ENCODE measurements at regions of chr11 and their contacts with region 1.

Region 1: DNA sequence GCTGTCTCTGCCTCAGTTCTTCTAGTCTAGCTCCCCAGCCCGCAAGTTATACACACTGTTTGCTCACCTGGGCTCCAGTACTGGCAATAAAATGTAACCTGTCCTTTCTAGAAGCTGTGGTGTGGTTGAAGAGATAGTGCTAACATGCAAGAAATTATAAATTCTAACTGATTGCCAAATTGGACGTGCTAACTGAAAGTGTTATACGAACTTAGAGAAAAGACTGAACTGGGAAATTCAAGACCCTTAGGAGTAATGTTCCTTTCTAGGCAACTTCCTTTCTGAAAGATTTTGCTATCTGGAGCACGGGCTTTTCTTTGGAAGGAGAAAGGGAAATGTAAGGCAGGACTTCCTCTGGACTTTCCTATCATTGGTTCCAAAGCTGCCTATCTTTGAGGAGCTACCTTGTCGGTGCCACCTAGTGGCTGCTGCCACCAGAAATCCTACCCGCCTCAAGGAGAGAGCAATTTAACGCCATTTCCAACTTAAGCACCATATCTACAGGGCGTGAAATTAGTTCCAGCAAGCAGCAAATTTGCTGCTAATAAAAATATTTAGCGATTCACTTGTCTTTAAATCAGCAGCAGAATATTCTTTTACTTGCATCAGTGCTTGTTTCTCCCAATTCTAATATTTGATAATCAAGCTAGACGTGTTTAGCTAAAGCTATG is 12.7 kb upstream of the TMEM218 start:
- DNase-seq: no peak
- H3K4me3 ChIP-seq: no peak overlapping the region
- CTCF ChIP-seq: peak; percentile 41

Region 2: GRCh38 chr11:124602193-124602592 is 521.9 kb before region 1 on chr11:
- CTCF ChIA-PET with region 1: no interaction called
- POLR2A ChIA-PET with region 1: no interaction called
- DNase-seq: no peak
- H3K4me3 ChIP-seq: no peak overlapping the region
- CTCF ChIP-seq: no peak

Region 3: DNA sequence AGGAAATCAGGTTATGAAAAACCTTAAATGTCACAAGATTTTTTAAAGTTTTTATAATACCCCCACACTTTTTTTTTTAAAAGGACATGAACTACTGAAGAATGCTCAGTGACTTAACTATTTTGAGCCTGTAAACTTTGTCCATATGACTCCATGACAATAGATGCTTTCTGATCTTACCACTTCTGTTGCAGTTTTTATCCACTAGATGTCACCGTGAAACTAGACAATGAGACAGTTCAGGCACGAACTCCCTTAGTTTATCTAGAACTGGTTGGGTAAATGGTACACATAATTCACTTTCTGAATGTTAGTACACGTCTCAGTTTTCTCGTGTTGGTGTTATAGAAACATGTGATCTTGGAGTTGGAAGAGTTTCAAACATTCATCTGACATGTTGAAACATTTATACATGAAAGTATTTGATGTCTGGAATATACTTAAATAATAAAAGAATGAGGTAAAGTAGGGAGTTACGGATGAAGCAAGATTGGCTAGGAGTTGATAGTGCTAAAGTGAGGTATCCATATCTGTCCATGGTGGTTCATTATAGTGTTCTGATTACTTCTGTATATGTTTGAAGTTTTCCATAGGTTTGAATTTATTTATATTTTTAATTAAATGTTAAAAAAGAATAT is 162.0 kb before region 1 on chr11:
- CTCF ChIA-PET with region 1: interaction called, 10 read pairs
- POLR2A ChIA-PET with region 1: no interaction called
- DNase-seq: peak; percentile 33
- H3K4me3 ChIP-seq: no peak overlapping the region
- CTCF ChIP-seq: peak; percentile 51

Region 4: GRCh38 chr11:125111343-125112207 is 12.5 kb before region 1 on chr11 and contains the start of gene TMEM218:
- CTCF ChIA-PET with region 1: interaction called, 29 read pairs
- POLR2A ChIA-PET with region 1: interaction called, 3 read pairs
- DNase-seq: peak; percentile 94
- H3K4me3 ChIP-seq: peak within 1 kb of the TSS; percentile 87
- CTCF ChIP-seq: no peak

Region 5: DNA sequence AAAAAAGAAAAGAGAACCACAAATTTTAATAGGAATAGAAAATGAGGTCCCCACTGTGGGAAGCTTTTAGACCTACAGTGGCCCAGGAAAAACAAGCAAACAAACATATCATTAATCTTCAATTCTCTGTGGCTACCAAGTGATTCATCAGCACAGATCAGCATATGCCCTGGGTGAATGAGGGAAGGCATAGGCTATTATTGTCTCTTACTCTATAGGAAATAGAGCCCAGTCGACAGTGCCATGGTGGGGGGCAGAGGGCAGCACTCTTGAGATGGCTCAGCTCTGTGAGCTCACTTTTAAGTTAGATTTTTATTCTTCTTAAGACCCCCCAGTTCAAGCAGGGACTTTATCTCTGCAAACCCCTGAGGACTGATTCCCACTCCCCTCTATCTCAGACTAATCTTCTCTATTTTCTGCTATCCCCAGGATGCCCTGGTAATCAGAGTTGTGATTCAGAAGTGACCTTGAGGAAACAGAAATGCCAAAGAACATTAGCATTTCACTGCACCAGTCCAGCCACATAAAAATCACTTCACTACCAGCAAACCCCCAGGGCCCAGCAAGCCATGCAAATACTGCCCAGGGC is 381.5 kb after region 1 on chr11:
- CTCF ChIA-PET with region 1: no interaction called
- POLR2A ChIA-PET with region 1: no interaction called
- DNase-seq: no peak
- H3K4me3 ChIP-seq: no peak overlapping the region
- CTCF ChIP-seq: no peak

Measured in AG04449 (cell line).